CD4-positive, alpha-beta T cell (primary cell): ENCODE measurements at regions of chr14 and their contacts with region 1.

Region 1: DNA sequence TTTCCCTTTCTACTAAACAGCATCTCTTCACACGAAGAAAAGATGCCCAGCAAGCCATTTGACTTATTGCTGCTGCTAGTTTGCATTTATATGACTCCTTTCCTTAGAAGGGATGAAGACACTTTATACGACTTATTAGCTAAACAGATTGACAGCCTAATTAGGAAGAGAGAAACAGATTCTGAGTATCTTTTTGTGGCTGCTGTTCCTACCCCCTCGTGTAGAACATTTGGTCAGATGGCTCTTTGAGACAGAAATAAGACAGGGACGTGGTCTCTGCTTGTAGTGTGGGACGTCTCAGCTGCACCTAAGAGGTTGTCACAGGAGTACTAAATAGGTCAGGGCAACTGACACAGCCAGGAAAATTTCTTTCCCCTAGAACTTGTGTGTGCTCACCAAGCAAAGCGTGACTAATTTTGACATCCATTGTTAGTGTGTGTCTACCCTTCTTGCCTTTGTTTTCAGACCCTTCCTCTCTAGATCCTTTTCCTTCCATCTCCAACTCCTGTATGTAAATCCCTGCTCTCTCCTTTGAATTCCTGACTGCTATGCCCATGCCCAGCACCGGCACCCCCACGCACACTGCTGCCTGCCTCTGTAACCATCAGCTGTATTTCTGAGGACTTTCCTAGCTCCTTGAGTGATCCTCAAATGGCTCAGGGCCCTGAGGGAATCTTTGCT is 83.2 kb downstream of the DAD1 start:
- DNase-seq: peak in 5 of 14 experiments; percentile 26 to 65 (median 56)
- ATAC-seq: peak; percentile 36
- H3K4me3 ChIP-seq: peak overlapping the region; percentile 61
- H3K4me3 Mint-ChIP-seq: peak overlapping the region; percentile 77
- H3K27ac ChIP-seq: peak overlapping the region; percentile 77 to 99
- H3K27ac Mint-ChIP-seq: peak overlapping the region; percentile 93
- H3K4me1 ChIP-seq: peaks cover 45% of the 10 kb centered on the region
- H3K4me1 Mint-ChIP-seq: peaks cover 79% of the 10 kb centered on the region
- H3K27me3 ChIP-seq: no peaks in the 10 kb centered on the region
- H3K27me3 Mint-ChIP-seq: no peaks in the 10 kb centered on the region
- CTCF ChIP-seq: no peak

Region 2: GRCh38 chr14:21997300-21997699 is 508.5 kb before region 1 on chr14:
- CTCF ChIA-PET with region 1: no interaction called
- POLR2A ChIA-PET with region 1: interaction called, 7 read pairs
- intact Hi-C with region 1: loop called in 1 of 2 experiments (anchors 10 kb)
- DNase-seq: peak in 7 of 14 experiments; percentile 16 to 77 (median 47)
- ATAC-seq: peak; percentile 90
- H3K4me3 ChIP-seq: peak overlapping the region; percentile 56
- H3K4me3 Mint-ChIP-seq: peak overlapping the region; percentile 95
- H3K27ac ChIP-seq: no peak overlapping the region
- H3K27ac Mint-ChIP-seq: peak overlapping the region; percentile 88
- H3K4me1 ChIP-seq: peaks cover under 1% of the 10 kb centered on the region
- H3K4me1 Mint-ChIP-seq: peaks cover 27% of the 10 kb centered on the region
- H3K27me3 ChIP-seq: no peaks in the 10 kb centered on the region
- H3K27me3 Mint-ChIP-seq: no peaks in the 10 kb centered on the region
- CTCF ChIP-seq: no peak

Region 3: GRCh38 chr14:22531451-22532344 is 25.9 kb after region 1 on chr14:
- CTCF ChIA-PET with region 1: interaction called, 3 read pairs
- POLR2A ChIA-PET with region 1: interaction called, 217 read pairs
- intact Hi-C with region 1: no loop called
- DNase-seq: peak in 3 of 14 experiments; percentile 45 to 73 (median 48)
- ATAC-seq: peak; percentile 51
- H3K4me3 ChIP-seq: peak overlapping the region; percentile 61
- H3K4me3 Mint-ChIP-seq: peak overlapping the region; percentile 86
- H3K27ac ChIP-seq: peak overlapping the region; percentile 52 to 99
- H3K27ac Mint-ChIP-seq: peak overlapping the region; percentile 93
- H3K4me1 ChIP-seq: peaks cover 79% of the 10 kb centered on the region
- H3K4me1 Mint-ChIP-seq: peaks cover 95% of the 10 kb centered on the region
- H3K27me3 ChIP-seq: no peaks in the 10 kb centered on the region
- H3K27me3 Mint-ChIP-seq: no peaks in the 10 kb centered on the region
- CTCF ChIP-seq: no peak

Region 4: DNA sequence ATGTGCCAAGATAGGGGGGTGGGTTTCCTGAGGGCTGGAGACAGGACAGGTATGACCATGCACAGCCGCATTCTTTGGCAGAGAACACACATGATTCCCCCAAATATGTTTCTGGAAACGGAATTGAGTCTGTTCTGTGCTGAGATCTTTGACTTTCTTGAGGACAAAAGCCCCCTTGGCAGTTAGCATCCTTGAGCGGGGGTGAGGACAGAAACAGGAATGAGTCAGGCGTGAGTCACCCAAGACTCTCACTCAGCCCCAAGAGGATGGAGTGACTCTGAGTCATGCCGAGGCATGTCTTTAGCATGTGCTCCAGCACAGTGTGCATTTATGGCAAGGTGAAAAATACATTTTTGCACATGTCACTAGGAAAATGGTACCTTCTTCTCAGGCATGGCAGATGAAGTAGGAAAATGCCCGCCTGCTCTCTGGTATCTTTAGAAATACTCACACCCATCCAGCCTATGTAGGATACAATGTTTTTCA is 31.1 kb after region 1 on chr14:
- CTCF ChIA-PET with region 1: no interaction called
- POLR2A ChIA-PET with region 1: interaction called, 217 read pairs
- intact Hi-C with region 1: no loop called
- DNase-seq: peak in 13 of 14 experiments; percentile 66 to 92 (median 74)
- ATAC-seq: peak; percentile 85
- H3K4me3 ChIP-seq: peak overlapping the region; percentile 61
- H3K4me3 Mint-ChIP-seq: peak overlapping the region; percentile 81
- H3K27ac ChIP-seq: peak overlapping the region; percentile 61 to 99
- H3K27ac Mint-ChIP-seq: peak overlapping the region; percentile 93
- H3K4me1 ChIP-seq: peaks cover 86% of the 10 kb centered on the region
- H3K4me1 Mint-ChIP-seq: peaks cover 99% of the 10 kb centered on the region
- H3K27me3 ChIP-seq: no peaks in the 10 kb centered on the region
- H3K27me3 Mint-ChIP-seq: no peaks in the 10 kb centered on the region
- CTCF ChIP-seq: no peak